A673 (cell line): ENCODE measurements at regions of chr4 and their contacts with region 1.

Region 1: GRCh38 chr4:4430492-4431197 is 43.7 kb downstream of the NSG1 start:
- DNase-seq: peak; percentile 71
- H3K4me3 ChIP-seq: no peak overlapping the region
- H3K27ac ChIP-seq: no peak overlapping the region
- H3K4me1 ChIP-seq: peaks cover 3% of the 10 kb centered on the region
- H3K27me3 ChIP-seq: no peaks in the 10 kb centered on the region
- CTCF ChIP-seq: peak; percentile 79

Region 2: DNA sequence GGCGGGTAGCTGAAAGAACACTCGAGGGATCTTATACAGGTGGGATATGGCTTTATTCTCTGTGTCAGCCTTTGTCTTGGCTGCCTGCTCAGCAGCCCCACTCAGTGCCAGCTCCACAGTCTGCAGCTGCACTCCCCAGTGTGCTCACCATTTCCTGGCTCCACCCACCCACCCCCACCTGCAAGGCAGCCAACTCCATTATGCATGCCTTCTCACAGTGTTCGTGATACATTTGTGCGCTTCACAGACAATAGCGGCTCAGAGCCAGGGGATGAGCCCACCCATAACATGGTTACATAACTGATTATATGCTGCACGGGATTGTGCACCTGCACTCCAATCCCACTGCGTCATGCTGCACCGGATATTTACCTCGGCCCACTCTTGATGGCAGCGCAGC is 173.8 kb before region 1 on chr4:
- CTCF ChIA-PET with region 1: no interaction called
- POLR2A ChIA-PET with region 1: no interaction called
- intact Hi-C with region 1: loop called (anchors 10 kb)
- DNase-seq: peak; percentile 17
- H3K4me3 ChIP-seq: no peak overlapping the region
- H3K27ac ChIP-seq: no peak overlapping the region
- H3K4me1 ChIP-seq: no peaks in the 10 kb centered on the region
- H3K27me3 ChIP-seq: no peaks in the 10 kb centered on the region
- CTCF ChIP-seq: no peak

Region 3: DNA sequence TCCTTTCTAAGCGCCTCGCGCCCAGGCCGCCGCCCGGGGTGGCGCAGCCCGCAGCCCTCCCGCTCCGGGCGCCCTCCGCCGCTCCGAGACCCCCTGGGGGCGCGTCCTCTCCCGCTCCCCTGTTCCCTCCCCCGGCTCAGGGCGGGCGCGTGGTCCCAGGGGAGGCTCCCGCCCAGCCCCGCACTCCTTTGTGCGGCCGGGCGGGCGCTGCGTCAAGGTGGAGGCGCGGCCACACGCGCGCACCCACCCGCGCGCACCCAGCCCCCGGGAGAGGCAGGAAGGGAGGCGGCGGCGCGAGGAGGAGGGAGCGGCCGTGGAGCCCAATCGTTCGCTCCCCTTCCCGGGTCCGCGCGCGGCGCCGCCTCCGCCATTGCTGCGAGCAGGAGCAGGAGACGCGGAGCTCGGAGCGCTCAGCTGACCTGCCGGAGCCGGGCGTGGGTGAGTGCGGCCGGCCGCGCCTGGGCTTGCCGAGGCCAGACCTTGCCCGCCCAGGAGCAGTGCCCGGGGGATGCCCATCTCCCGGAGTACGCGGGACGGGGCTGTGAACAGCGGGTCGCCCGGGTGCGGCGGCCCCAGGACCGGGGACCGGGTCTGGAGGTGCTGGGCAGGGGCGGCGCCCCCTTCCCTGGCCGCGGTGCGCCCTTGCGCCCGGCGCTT is 43.8 kb before region 1 on chr4 and contains the start of gene NSG1:
- CTCF ChIA-PET with region 1: interaction called, 4 read pairs
- POLR2A ChIA-PET with region 1: no interaction called
- intact Hi-C with region 1: loop called (anchors 5 kb)
- DNase-seq: peak; percentile 33
- H3K4me3 ChIP-seq: peak within 1 kb of the TSS; percentile 55
- H3K27ac ChIP-seq: no peak within 1 kb of the TSS
- H3K4me1 ChIP-seq: peaks cover 16% of the 10 kb centered on the region
- H3K27me3 ChIP-seq: peaks cover 66% of the 10 kb centered on the region
- CTCF ChIP-seq: no peak
- total RNA-seq, gene NSG1: 1.3 and 2.7 TPM in 2 replicates